Panc1 (cell line): ENCODE measurements at regions of chr3 and their contacts with region 1.

Region 1: GRCh38 chr3:132730891-132731580 is 8.8 kb upstream of the NPHP3 start:
- DNase-seq: no peak
- ATAC-seq: peak; percentile 93
- H3K4me3 ChIP-seq: no peak overlapping the region
- H3K27ac ChIP-seq: no peak overlapping the region
- H3K4me1 ChIP-seq: peaks cover 5% of the 10 kb centered on the region; the same call in 1 of the 2 replicates
- H3K27me3 ChIP-seq: peaks cover 9% of the 10 kb centered on the region; the same call in 1 of the 2 replicates
- CTCF ChIP-seq: peak; percentile 74

Region 2: GRCh38 chr3:132380920-132381319 is 350.1 kb before region 1 on chr3:
- CTCF ChIA-PET with region 1: no interaction called
- POLR2A ChIA-PET with region 1: no interaction called
- in situ Hi-C with region 1: no loop called
- intact Hi-C with region 1: no loop called
- DNase-seq: no peak
- ATAC-seq: 0 out of 2 replicates have a peak, but pooled peaks have one; percentile 34
- H3K4me3 ChIP-seq: no peak overlapping the region
- H3K27ac ChIP-seq: no peak overlapping the region
- H3K4me1 ChIP-seq: no peaks in the 10 kb centered on the region
- H3K27me3 ChIP-seq: peaks cover 17% of the 10 kb centered on the region
- CTCF ChIP-seq: no peak

Region 3: DNA sequence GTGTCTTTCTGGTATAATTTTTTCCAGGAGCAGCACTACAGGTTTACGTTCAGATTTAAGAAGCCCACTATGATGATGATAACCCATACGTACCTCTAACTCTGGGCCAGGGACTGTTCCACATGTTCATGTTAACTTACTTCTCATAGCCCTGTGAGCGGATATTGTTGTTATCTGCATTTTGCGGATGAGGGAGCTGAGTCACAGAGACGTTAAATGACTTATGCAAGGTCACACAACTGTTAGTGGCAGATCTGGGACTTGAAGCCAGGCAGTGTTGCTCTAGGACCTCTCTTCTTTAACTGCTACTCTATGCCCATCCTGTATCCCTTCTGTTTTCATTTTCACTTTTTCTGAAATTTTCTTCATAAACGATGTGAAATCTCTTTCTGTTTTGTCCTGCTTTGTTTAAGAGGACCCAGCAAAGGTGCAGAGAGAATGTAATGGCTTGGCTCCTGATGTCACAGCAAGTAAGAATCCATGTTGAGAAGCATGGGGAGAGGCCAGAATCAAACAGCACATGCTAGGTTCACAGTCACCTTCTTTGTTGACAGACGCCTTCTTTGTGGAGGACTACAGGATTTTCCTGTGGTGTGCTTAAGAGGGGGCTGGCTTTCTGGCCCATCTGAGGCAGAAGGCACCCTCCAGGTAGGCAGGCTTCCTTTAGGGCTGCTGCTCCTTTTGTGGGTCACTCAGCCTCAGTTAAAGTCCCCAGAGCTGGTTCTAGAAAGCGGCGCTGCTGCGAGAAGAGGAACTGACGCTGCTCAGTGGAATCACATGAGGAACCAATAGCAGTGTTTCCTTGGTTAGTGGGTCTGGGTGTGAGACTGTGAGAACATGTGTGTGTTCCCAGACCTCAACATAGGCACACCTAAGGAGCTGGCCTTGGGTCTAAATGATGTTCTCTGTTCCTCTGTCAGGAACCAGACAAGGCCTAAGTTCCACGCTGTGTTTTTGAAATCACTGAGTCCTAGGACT is 428.8 kb after region 1 on chr3:
- CTCF ChIA-PET with region 1: no interaction called
- POLR2A ChIA-PET with region 1: no interaction called
- in situ Hi-C with region 1: no loop called
- intact Hi-C with region 1: no loop called
- DNase-seq: no peak
- ATAC-seq: no peak; the same call in 1 of the 2 replicates
- H3K4me3 ChIP-seq: no peak overlapping the region
- H3K27ac ChIP-seq: no peak overlapping the region
- H3K4me1 ChIP-seq: no peaks in the 10 kb centered on the region
- H3K27me3 ChIP-seq: no peaks in the 10 kb centered on the region
- CTCF ChIP-seq: no peak

Region 4: GRCh38 chr3:133426721-133427120 is 695.7 kb after region 1 on chr3:
- CTCF ChIA-PET with region 1: interaction called, 15 read pairs
- POLR2A ChIA-PET with region 1: no interaction called
- in situ Hi-C with region 1: no loop called
- intact Hi-C with region 1: loop called (anchors 2 kb)
- DNase-seq: no peak
- ATAC-seq: no peak
- H3K4me3 ChIP-seq: no peak overlapping the region
- H3K27ac ChIP-seq: peak overlapping the region; percentile 32
- H3K4me1 ChIP-seq: peaks cover 17% of the 10 kb centered on the region
- H3K27me3 ChIP-seq: no peaks in the 10 kb centered on the region
- CTCF ChIP-seq: no peak